ENCODE measurements at regions of chr9 and their contacts with region 1.

Region 1: GRCh38 chr9:33623658-33624586 is 99.9 kb downstream of the ANKRD18B start:
- DNase-seq: peak; percentile 45
- ATAC-seq: peak; percentile 92
- H3K4me3 Mint-ChIP-seq: no peak overlapping the region
- H3K27ac Mint-ChIP-seq: no peak overlapping the region
- H3K4me1 Mint-ChIP-seq: peaks cover 4% of the 10 kb centered on the region
- H3K27me3 Mint-ChIP-seq: peaks cover 33% of the 10 kb centered on the region
- CTCF ChIP-seq: no peak

Region 2: DNA sequence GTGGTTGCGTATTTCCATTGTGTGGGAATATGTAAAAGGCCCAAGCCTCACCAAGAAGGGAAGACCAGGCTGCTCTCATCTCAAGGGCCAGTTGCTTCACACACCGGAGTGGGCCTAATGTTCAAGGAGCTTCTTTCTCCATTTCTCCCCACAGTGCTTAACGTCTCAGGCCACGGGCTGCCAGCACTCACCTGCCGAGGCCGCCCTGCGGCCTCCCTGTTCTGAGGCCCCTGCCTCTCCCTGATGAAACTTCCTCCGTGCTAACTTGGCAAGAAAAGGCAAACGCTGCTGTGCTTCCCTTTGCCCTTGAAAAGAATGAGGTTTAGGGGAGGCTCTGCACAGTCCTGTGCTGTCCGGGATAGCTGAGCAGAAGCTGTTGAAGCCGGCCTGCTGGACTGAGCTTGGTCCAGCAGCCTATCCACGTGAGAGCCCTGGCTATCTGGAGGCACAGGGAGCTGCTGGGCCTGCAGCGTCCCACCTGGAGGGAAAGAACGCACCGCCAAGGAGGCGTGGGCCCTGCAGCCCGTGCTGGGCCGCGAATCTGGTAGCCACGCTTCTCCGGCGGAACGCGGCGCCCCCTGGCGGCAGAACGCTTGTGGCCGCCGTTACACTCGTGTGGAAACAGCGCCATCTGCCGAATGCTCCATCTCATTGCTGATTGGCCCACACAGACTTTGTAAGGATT is 97.9 kb after region 1 on chr9:
- CTCF ChIA-PET with region 1: interaction called, 54 read pairs
- POLR2A ChIA-PET with region 1: no interaction called
- intact Hi-C with region 1: loop called (anchors 1 kb)
- DNase-seq: peak; percentile 72
- ATAC-seq: peak; percentile 85
- H3K4me3 Mint-ChIP-seq: no peak overlapping the region
- H3K27ac Mint-ChIP-seq: no peak overlapping the region
- H3K4me1 Mint-ChIP-seq: peaks cover 4% of the 10 kb centered on the region
- H3K27me3 Mint-ChIP-seq: peaks cover 23% of the 10 kb centered on the region
- CTCF ChIP-seq: peak; percentile 97

Region 3: DNA sequence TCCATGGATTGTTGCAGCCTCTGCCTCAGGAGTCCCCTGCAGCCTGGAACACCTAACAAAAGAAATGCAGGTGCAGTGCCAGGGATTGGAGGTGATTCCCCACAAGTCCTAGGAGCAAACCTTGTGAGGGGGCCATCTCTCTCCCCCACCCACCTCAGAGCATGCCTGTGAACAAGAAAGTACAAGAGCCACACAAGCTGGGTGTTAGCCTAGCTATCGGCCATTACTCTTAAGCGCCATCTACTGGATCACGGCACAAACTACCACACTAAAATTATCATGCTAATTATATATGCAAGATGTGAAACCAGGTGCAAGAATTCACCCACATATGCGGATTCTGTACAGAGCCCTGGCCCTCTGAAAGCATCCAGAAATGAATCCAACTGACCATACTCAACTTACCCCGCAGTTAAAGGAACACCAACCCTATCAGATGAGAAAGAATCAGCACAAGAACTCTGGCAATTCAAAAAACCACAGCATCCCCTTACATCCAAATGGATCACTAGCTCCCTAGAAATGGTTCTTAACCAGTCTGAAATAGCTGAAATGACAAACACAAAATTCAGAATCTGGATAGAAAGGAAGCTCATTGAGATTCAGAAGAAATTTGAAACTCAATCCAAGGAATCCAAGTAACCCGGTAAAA is 154.9 kb after region 1 on chr9:
- CTCF ChIA-PET with region 1: interaction called, 20 read pairs
- POLR2A ChIA-PET with region 1: no interaction called
- intact Hi-C with region 1: loop called (anchors 1 kb)
- DNase-seq: no peak
- ATAC-seq: peak; percentile 88
- H3K4me3 Mint-ChIP-seq: no peak overlapping the region
- H3K27ac Mint-ChIP-seq: no peak overlapping the region
- H3K4me1 Mint-ChIP-seq: peaks cover 5% of the 10 kb centered on the region
- H3K27me3 Mint-ChIP-seq: peaks cover 9% of the 10 kb centered on the region
- CTCF ChIP-seq: peak; percentile 39

Region 4: DNA sequence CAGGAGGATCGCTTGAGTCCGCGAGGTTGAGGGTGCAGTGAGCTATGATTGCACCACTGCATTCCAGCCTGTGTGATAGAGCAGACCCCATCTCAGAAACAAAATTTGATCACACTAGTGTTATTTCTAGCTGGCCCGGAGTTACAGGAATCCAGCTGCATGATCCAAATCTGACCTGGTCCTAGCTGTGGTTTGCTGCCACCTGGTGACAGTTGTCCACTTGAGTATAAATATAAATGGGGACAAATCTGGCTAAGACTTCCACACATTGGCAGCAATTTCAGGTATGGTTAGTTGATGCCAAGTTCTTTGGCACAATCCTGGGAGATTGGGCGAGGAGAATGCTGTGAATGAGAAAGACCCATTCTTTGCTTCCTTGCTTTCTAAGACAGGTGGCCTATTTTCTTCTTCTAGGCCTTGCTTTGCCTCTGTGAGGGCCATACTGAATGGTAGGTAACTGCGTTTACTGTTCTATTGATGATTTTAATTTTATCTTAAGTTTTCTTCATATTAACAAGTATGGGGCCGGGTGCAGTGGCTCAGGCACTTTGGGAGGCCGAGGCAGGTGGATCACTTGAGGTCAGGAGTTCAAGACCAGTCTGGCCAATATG is 228.4 kb after region 1 on chr9:
- CTCF ChIA-PET with region 1: interaction called, 9 read pairs
- POLR2A ChIA-PET with region 1: no interaction called
- intact Hi-C with region 1: loop called (anchors 1 kb)
- DNase-seq: peak; percentile 23
- ATAC-seq: peak; percentile 70
- H3K4me3 Mint-ChIP-seq: no peak overlapping the region
- H3K27ac Mint-ChIP-seq: no peak overlapping the region
- H3K4me1 Mint-ChIP-seq: peaks cover 40% of the 10 kb centered on the region
- H3K27me3 Mint-ChIP-seq: no peaks in the 10 kb centered on the region
- CTCF ChIP-seq: no peak

Region 5: DNA sequence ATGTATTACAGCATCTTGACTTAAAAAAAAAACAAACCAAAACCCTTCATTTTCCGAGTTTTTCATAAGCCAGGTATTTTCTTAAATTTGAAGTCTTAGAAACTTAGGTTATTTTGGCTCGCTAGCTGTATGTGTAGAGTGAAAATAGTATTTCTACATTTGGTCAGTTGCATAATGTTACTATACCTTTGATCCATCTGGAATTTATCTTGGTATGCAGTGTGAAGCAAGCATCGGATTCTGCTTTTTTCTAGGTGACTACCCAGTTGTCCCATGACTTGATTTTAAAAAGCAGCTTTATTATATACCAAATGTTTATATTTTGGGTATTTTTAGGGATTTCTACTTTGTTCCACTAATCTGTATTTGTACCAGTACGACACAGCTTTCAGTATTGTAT is 582.6 kb after region 1 on chr9:
- CTCF ChIA-PET with region 1: no interaction called
- POLR2A ChIA-PET with region 1: no interaction called
- intact Hi-C with region 1: no loop called
- DNase-seq: no peak
- ATAC-seq: no peak
- H3K4me3 Mint-ChIP-seq: no peak overlapping the region
- H3K27ac Mint-ChIP-seq: no peak overlapping the region
- H3K4me1 Mint-ChIP-seq: peaks cover 15% of the 10 kb centered on the region
- H3K27me3 Mint-ChIP-seq: no peaks in the 10 kb centered on the region
- CTCF ChIP-seq: no peak

Measured in activated B cell treated with CpG ODN at 0.5 μM for 24 hours (primary cell).